H1 (cell line): ENCODE measurements at regions of chr1 and their contacts with region 1.

Region 1: DNA sequence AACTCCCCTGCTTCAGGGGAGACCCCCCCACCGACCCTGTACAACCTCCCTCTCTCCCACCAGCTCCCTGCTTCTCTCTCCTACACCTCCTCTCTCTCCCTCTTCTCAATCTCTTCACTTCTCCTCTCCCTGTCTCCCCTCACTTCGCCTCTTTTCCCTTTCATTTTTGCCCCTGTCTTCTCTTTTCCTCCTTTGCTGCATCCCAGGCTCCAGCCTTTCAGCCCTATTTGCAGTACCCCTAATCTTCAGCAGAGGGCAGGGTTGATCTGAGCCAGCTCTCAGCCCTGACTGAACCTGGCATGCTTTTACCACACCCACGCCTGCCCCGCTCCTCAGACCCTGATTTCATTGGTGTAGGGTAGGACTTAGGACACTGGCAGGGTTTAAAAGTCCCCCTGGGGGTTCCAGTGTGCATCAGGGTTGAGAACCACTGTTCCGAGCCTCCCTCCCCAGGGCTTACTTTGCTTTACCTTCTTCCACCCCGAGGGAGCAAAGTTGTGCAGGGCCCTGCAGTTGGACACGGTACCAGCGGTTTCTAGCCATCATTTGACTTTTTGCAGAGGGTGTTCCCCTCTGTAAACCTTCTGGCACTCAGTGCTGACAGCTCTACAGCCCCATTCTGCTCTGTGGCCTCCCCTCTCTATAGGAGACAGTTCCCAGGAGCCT is 67.3 kb upstream of the CNTN2 start:
- DNase-seq: peak; percentile 23 to 88
- H3K4me3 ChIP-seq: no peak overlapping the region
- H3K27ac ChIP-seq: no peak overlapping the region
- H3K4me1 ChIP-seq: no peaks in the 10 kb centered on the region
- H3K27me3 ChIP-seq: no peaks in the 10 kb centered on the region
- CTCF ChIP-seq: peak; percentile 77 to 82 (median 80)
- EP300 ChIP-seq: no peak
- POLR2A ChIP-seq: no peak
- RAD21 ChIP-seq: peak; percentile 84 to 86

Region 2: DNA sequence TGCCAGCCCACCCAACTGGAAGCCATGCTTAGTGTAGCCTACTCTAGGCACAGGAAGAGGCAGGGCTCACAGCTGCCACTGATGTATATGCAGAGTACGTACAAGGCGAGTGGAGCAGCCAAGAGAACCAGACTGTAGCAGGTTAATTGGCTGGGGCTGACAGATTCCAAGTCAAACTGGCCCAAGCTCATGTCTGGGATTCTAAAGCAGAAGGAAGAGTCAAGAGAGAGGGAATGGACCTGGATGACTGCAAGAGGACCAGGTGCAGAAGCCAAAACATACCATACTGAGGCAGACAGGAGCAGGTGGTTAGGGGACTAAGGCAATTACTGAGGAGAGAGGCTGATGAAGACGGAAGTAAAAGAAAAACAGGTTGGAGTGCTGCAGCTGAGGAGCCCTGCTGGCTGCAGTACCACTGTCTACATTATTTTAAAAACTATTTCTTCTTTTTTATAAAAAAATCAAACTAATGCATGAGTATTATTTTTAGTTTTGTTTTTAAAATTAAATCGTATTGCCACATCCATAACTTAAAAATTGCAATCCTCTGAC is 238.8 kb before region 1 on chr1:
- CTCF ChIA-PET with region 1: no interaction called
- POLR2A ChIA-PET with region 1: no interaction called
- DNase-seq: peak in 1 of 2 experiments; percentile 26
- H3K4me3 ChIP-seq: no peak overlapping the region
- H3K27ac ChIP-seq: no peak overlapping the region
- H3K4me1 ChIP-seq: no peaks in the 10 kb centered on the region
- H3K27me3 ChIP-seq: no peaks in the 10 kb centered on the region; a peak in 1 of 7 replicates
- CTCF ChIP-seq: no peak
- EP300 ChIP-seq: no peak
- POLR2A ChIP-seq: no peak
- RAD21 ChIP-seq: no peak

Region 3: DNA sequence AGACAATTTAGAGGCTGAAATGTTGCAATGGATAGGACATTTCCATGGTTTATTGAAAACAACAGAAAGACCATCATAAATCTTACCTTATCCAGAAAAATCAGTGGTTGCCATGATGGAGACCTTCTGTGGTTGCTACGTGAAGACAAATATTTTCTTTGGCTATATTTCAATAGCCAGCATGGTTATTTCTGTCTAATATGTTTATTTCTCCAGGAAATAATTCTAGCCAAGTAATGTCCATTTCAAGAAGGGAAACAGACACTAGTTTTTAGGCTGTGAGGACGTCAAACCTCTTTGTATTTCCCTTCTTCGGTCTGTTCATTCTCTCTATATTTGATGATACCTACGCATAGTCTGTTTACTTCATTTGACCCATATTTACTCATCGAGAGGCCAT is 154.2 kb before region 1 on chr1:
- CTCF ChIA-PET with region 1: interaction called, 35 read pairs
- POLR2A ChIA-PET with region 1: no interaction called
- DNase-seq: no peak
- H3K4me3 ChIP-seq: no peak overlapping the region
- H3K27ac ChIP-seq: no peak overlapping the region
- H3K4me1 ChIP-seq: no peaks in the 10 kb centered on the region
- H3K27me3 ChIP-seq: no peaks in the 10 kb centered on the region; a peak in 1 of 7 replicates
- CTCF ChIP-seq: no peak
- EP300 ChIP-seq: no peak
- POLR2A ChIP-seq: no peak
- RAD21 ChIP-seq: no peak

Region 4: GRCh38 chr1:204961765-204962419 is 13.8 kb before region 1 on chr1:
- CTCF ChIA-PET with region 1: interaction called, 112 read pairs
- POLR2A ChIA-PET with region 1: no interaction called
- DNase-seq: no peak
- H3K4me3 ChIP-seq: no peak overlapping the region
- H3K27ac ChIP-seq: no peak overlapping the region
- H3K4me1 ChIP-seq: peaks cover 0 to 4% (median 2%) of the 10 kb centered on the region in 4 experiments; a peak in 4 of 7 replicates
- H3K27me3 ChIP-seq: no peaks in the 10 kb centered on the region
- CTCF ChIP-seq: peak in 2 of 3 experiments; percentile 40 to 47; a peak in 3 of 4 replicates
- EP300 ChIP-seq: no peak
- POLR2A ChIP-seq: no peak
- RAD21 ChIP-seq: peak; percentile 65 to 73

Region 5: GRCh38 chr1:205013683-205014367 is 38.1 kb after region 1 on chr1:
- CTCF ChIA-PET with region 1: interaction called, 16 read pairs
- POLR2A ChIA-PET with region 1: no interaction called
- DNase-seq: no peak
- H3K4me3 ChIP-seq: no peak overlapping the region
- H3K27ac ChIP-seq: no peak overlapping the region
- H3K4me1 ChIP-seq: peaks cover 0 to 21% (median 7%) of the 10 kb centered on the region in 4 experiments; a peak in 5 of 7 replicates
- H3K27me3 ChIP-seq: no peaks in the 10 kb centered on the region
- CTCF ChIP-seq: no peak
- EP300 ChIP-seq: no peak
- POLR2A ChIP-seq: no peak
- RAD21 ChIP-seq: no peak